Activated CD4-positive, alpha-beta T cell treated with anti-CD3 and anti-CD28 coated beads, Interleukin-2, amount 10 ng/mL, durations not matched to agents 7 days and 5 days (primary cell): ENCODE measurements at regions of chr7 and their contacts with region 1.

Region 1: DNA sequence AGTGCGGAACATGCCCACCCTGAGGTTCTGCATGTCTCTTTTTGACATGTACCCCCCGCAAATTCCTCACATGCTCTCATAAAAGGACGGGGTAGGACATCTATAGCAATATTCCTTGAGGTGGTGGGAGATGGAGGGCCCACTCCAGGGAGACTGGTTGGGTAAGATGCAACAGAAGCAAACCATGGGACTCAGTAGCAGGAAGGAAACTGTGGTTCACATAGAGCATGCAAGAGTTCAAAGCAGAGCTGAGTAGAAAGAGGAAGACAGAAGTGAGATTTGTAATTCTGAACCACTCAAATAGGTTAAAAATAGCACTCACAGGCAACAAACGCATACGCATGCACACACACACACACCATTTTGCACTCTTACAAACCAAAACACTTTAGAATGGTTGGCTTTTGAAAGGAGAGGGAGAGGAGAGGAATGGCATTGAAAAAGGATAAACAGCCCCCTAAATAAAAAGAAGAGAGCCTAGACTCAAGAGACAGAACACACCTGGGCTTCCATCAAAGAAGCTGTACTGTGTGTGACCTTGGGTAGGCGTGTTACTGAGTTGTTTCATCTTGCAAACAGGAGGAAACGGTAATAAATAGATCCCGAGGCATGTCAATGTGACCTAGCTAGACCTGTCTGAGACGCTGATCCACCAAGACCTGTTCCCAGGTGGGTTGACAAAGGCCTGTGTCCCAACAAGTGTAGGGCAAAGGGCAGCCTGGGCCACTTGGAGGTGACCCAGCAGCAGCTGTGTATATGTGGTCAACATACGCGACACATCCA is 77.6 kb upstream of the LRRC4 start:
- DNase-seq: peak; percentile 54
- H3K4me3 Mint-ChIP-seq: peak overlapping the region; percentile 50
- H3K27ac Mint-ChIP-seq: peak overlapping the region; percentile 90
- H3K4me1 Mint-ChIP-seq: peaks cover 67% of the 10 kb centered on the region
- H3K27me3 Mint-ChIP-seq: peaks cover 3% of the 10 kb centered on the region

Region 2: DNA sequence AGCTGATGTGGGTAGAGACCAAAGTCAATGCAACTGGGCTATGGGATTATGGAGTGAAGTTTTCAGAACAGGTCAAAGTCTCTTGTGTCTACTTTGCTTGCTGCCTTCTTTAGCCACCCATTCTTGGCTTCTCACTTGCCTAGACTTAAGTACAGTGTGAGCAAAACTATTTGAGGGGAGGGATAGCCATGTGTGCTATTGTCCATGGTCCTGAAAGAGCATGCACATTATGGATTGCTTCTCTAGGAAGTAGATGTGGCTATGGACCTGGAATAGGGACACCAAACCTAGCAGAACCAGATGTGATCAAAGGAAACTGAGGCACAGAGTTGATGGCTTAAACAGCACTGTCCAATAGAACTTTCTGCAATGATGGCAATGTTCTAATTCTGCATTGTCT is 634.4 kb before region 1 on chr7:
- CTCF ChIA-PET with region 1: no interaction called
- POLR2A ChIA-PET with region 1: interaction called, 16 read pairs
- DNase-seq: no peak
- H3K4me3 Mint-ChIP-seq: no peak overlapping the region
- H3K27ac Mint-ChIP-seq: no peak overlapping the region
- H3K4me1 Mint-ChIP-seq: no peaks in the 10 kb centered on the region
- H3K27me3 Mint-ChIP-seq: peaks cover 5% of the 10 kb centered on the region